ENCODE measurements at regions of chr12 and their contacts with region 1.

Region 1: DNA sequence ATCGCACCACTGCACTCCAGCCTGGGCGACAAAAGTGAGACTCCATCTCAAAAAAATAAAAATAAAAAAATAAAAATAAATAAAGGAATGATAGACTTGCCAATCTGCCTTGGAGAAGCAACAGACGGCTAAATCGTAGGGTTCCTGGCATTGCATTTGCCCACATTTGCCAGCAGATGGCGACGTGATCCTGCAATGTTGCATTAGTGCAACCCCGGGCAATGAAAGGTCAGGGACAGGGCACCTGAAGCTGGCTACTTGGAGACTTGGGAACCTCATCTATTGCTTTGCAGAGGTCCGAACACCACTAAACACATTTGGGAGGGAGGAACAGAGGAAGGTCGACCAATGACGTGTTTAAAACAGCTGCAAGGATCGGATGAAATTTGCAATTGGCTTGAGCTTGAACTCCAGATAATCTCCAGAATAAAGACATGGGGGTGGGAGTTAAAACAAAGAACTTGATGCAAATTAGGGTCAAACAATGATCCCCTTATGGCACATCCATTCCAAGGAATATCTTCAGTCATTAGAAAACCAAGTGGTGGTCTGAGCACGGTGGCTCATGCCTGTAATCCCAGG is 34.6 kb downstream of the SPRING1 start:
- DNase-seq: peak; percentile 16
- ATAC-seq: peak; percentile 90
- H3K4me3 ChIP-seq: no peak overlapping the region
- H3K27ac ChIP-seq: no peak overlapping the region
- H3K4me1 ChIP-seq: no peaks in the 10 kb centered on the region
- H3K27me3 ChIP-seq: peaks cover 0 to 4% of the 10 kb centered on the region in 2 experiments; a peak in 2 of 4 replicates
- CTCF ChIP-seq: peak; percentile 86 to 92 (median 92); a peak in 5 of 6 replicates
- EP300 ChIP-seq: no peak
- POLR2A ChIP-seq: no peak
- RAD21 ChIP-seq: peak; percentile 96

Region 2: GRCh38 chr12:115998119-115998633 is 705.1 kb before region 1 on chr12:
- CTCF ChIA-PET with region 1: interaction called, 18 read pairs
- POLR2A ChIA-PET with region 1: no interaction called
- RAD21 ChIA-PET with region 1: interaction called, 3 read pairs
- SMC1A ChIA-PET with region 1: interaction called, 3 read pairs
- in situ Hi-C with region 1: loop called (anchors 10 kb)
- intact Hi-C with region 1: loop called (anchors 2 kb)
- DNase-seq: no peak
- ATAC-seq: peak; percentile 68
- H3K4me3 ChIP-seq: no peak overlapping the region
- H3K27ac ChIP-seq: no peak overlapping the region
- H3K4me1 ChIP-seq: peaks cover 3% of the 10 kb centered on the region
- H3K27me3 ChIP-seq: no peaks in the 10 kb centered on the region
- CTCF ChIP-seq: peak; percentile 56 to 65 (median 64)
- EP300 ChIP-seq: no peak
- POLR2A ChIP-seq: no peak
- RAD21 ChIP-seq: peak; percentile 59

Region 3: DNA sequence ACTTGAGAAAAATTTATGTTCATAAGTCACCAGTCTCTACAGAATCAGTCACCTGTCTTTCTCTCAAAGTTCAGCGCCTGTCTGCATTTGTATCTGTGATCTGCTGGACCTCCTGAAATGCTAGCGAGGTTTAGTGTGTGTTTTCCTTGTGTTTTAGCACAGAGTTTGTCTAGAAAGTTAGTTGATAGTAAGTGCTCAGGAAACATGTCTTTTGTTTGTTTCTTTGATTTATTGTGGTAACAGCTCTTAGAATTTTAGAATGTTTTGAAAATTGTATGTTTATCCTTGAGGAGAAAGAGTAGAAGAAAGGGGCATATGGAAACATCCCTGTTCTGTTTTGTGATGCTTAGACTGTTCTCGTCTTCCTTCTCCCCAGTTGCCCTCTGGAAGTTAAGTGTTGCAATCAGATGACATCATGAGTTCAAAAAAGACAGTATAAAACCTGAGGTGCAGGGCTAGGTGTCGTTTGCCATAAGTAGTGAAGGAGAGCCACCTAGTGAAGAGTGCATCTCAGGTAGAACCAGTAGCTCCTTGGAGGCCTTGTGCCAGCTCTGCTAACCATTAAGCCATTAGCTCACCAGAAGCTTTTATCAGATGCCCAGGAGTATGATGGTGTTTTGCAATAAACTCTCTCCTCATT is 252.2 kb after region 1 on chr12:
- CTCF ChIA-PET with region 1: interaction called, 3 read pairs
- POLR2A ChIA-PET with region 1: no interaction called
- RAD21 ChIA-PET with region 1: no interaction called
- SMC1A ChIA-PET with region 1: no interaction called
- in situ Hi-C with region 1: no loop called
- intact Hi-C with region 1: loop called (anchors 10 kb)
- DNase-seq: no peak
- ATAC-seq: peak; percentile 37; the same call in 1 of the 3 replicates
- H3K4me3 ChIP-seq: no peak overlapping the region
- H3K27ac ChIP-seq: no peak overlapping the region
- H3K4me1 ChIP-seq: peaks cover 11% of the 10 kb centered on the region
- H3K27me3 ChIP-seq: no peaks in the 10 kb centered on the region
- CTCF ChIP-seq: peak; percentile 7 to 19 (median 17); a peak in 3 of 6 replicates
- EP300 ChIP-seq: no peak
- POLR2A ChIP-seq: no peak
- RAD21 ChIP-seq: peak; percentile 44; the same call in 1 of the 2 replicates

Region 4: DNA sequence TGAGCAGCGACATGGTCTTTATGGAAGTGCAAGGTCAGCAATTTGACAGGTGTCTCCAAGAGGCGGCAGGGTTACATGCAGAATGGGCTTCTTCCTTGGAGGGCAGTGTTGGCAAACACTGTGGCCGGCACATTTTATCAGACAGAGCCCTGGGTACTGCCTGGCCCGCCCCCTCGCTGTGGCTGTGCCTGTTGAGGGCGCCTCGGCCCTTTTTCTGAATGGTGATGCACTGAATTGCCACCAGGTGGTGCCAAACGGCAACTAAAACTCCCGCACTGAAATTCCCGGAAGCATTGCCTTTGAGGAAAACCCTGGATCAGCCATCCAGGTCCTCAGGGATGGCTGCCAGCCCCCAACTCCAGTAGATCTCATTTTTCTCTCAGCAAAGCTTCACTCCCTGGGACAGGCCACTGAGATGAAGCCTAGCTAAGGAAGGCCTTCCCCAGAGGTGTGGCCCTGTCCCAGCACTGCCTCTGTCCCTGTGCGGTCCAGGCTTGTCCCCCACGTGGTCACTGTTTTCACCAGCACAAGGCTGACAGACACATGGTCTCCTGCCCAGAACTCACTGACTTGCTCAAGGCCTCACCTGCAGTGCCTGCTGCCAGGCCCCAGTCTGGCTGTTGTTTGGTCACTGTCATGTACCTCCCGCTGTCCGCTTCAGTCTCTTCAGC is 322.3 kb after region 1 on chr12:
- CTCF ChIA-PET with region 1: interaction called, 4 read pairs
- POLR2A ChIA-PET with region 1: no interaction called
- RAD21 ChIA-PET with region 1: interaction called, 3 read pairs
- SMC1A ChIA-PET with region 1: interaction called, 3 read pairs
- in situ Hi-C with region 1: no loop called
- intact Hi-C with region 1: loop called (anchors 1 kb)
- DNase-seq: no peak
- ATAC-seq: peak; percentile 97
- H3K4me3 ChIP-seq: no peak overlapping the region
- H3K27ac ChIP-seq: no peak overlapping the region
- H3K4me1 ChIP-seq: no peaks in the 10 kb centered on the region
- H3K27me3 ChIP-seq: no peaks in the 10 kb centered on the region
- CTCF ChIP-seq: peak; percentile 72 to 95 (median 78)
- EP300 ChIP-seq: no peak
- POLR2A ChIP-seq: no peak
- RAD21 ChIP-seq: peak; percentile 79

Region 5: DNA sequence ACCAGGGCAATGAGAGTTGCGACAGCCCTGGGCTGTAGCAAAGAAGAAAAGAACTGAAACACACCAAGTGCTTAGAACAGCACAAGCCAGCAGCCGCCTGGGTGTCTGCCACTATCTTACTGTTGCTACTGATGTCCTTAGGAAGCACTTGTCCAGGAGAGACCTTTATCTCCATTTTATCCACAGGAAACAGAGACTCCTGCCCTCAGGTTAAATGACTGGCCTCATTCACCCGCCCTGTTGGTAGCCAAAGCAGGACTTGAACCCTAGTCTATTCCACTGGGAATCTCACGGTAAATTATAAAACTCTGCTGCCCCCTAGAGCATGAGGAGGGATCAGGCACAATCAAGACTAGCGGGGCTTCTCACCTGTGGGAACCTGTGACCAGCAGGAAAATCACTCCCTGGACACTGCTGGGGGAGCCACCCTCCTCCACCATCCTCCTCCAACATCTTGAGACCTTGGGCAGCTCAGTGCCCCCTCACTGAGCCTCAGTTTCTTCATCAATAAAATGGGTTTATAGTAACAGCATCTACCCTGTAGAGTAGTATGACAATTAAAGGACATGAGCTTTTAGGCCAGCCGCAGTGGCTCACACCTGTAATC is 416.4 kb after region 1 on chr12:
- CTCF ChIA-PET with region 1: interaction called, 43 read pairs
- POLR2A ChIA-PET with region 1: no interaction called
- RAD21 ChIA-PET with region 1: interaction called, 3 read pairs
- SMC1A ChIA-PET with region 1: interaction called, 14 read pairs
- in situ Hi-C with region 1: loop called (anchors 5 kb)
- intact Hi-C with region 1: loop called (anchors 1 kb)
- DNase-seq: no peak
- ATAC-seq: peak; percentile 92
- H3K4me3 ChIP-seq: no peak overlapping the region
- H3K27ac ChIP-seq: no peak overlapping the region
- H3K4me1 ChIP-seq: peaks cover 3% of the 10 kb centered on the region; the same call in 1 of the 2 replicates
- H3K27me3 ChIP-seq: no peaks in the 10 kb centered on the region
- CTCF ChIP-seq: peak; percentile 75 to 81 (median 77)
- EP300 ChIP-seq: no peak
- POLR2A ChIP-seq: no peak
- RAD21 ChIP-seq: peak; percentile 93